ENCODE measurements at regions of chr4 and their contacts with region 1.

Region 1: GRCh38 chr4:152535903-152536544 is at the start of gene FBXW7:
- DNase-seq: peak; percentile 99
- H3K4me3 Mint-ChIP-seq: peak within 1 kb of the TSS; percentile 92
- H3K27ac Mint-ChIP-seq: peak within 1 kb of the TSS; percentile 95
- H3K4me1 Mint-ChIP-seq: peaks cover 49% of the 10 kb centered on the region
- H3K27me3 Mint-ChIP-seq: no peaks in the 10 kb centered on the region
- CTCF ChIP-seq: no peak
- total RNA-seq, gene FBXW7: 35.8 and 40.2 TPM in 2 replicates

Region 2: DNA sequence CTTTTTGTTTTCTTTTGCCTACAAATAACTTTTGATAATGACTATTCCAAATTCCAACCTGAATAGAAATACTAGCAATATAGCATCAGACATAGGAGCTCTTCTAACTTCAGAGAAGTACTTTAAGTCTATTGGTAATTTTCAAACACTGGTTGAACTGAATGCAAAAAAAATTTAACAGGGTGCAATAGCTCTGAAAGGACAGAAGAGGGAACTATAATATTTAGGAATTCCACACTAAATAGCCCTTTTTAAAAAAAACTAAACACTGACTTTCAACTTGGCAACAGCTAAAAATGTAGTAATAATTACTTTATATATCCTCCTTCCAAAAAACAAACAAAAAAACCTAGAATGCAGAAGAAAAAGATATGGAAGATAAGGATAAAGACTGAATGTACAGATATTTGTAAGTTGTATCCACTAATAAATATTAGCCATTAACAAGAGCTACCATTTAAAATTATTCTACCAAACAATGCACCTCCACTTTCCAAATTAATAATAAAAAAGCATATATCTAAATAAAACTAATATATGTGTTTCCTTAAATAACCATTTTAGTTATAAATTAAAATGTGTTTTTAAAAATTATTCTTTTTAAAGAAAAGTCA is 81.5 kb before region 1 on chr4:
- CTCF ChIA-PET with region 1: interaction called, 4 read pairs
- POLR2A ChIA-PET with region 1: interaction called, 10 read pairs
- intact Hi-C with region 1: no loop called
- DNase-seq: peak; percentile 24
- H3K4me3 Mint-ChIP-seq: no peak overlapping the region
- H3K27ac Mint-ChIP-seq: no peak overlapping the region
- H3K4me1 Mint-ChIP-seq: peaks cover 35% of the 10 kb centered on the region
- H3K27me3 Mint-ChIP-seq: no peaks in the 10 kb centered on the region
- CTCF ChIP-seq: peak; percentile 60

Region 3: GRCh38 chr4:152460488-152460887 is 75.5 kb before region 1 on chr4:
- CTCF ChIA-PET with region 1: interaction called, 4 read pairs
- POLR2A ChIA-PET with region 1: interaction called, 10 read pairs
- intact Hi-C with region 1: loop called (anchors 5 kb)
- DNase-seq: peak; percentile 80
- H3K4me3 Mint-ChIP-seq: no peak overlapping the region
- H3K27ac Mint-ChIP-seq: peak overlapping the region; percentile 54
- H3K4me1 Mint-ChIP-seq: peaks cover 39% of the 10 kb centered on the region
- H3K27me3 Mint-ChIP-seq: no peaks in the 10 kb centered on the region
- CTCF ChIP-seq: peak; percentile 31

Region 4: DNA sequence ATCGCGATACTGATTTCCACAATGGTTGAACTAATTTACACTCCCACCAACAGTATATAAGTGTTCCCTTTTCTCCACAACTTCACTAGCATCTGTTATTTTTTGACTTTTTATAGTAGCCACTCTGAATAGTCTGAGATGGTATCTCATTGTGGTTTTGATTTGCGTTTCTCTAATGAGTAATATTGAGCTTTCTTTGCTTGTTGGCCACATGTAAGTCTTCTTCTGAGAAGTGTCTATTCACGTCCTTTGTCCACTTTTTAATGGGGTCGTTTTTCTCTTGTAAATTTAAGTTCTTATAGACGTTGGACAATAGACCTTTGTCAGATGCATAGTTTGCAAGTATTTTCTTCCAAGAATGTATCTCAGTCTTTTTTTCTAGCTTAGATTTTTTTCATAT is 10.2 kb before region 1 on chr4:
- CTCF ChIA-PET with region 1: no interaction called
- POLR2A ChIA-PET with region 1: interaction called, 71 read pairs
- intact Hi-C with region 1: no loop called
- DNase-seq: no peak
- H3K4me3 Mint-ChIP-seq: no peak overlapping the region
- H3K27ac Mint-ChIP-seq: no peak overlapping the region
- H3K4me1 Mint-ChIP-seq: peaks cover 26% of the 10 kb centered on the region
- H3K27me3 Mint-ChIP-seq: no peaks in the 10 kb centered on the region
- CTCF ChIP-seq: no peak

Region 5: DNA sequence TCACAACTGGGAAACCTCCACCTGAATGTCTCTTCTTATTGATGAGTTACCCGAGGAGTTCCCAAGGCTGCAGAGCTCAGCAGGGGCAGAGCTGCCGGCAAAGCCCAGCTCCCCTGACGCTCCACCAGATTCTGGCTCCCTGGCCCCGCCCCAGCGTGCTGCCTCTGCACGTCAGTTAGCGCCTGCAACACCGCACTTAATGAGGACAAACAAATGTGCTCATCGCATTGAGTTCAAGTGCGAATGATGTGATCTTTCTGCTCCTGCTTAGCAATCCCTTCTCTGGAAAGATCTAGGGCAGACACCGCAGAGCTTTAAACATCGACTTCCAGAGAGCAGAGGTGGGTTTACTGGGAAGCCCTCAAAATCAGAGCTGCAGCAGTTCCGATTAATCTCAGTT is 55.4 kb after region 1 on chr4:
- CTCF ChIA-PET with region 1: interaction called, 4 read pairs
- POLR2A ChIA-PET with region 1: interaction called, 35 read pairs
- intact Hi-C with region 1: loop called (anchors 2 kb)
- DNase-seq: peak; percentile 8
- H3K4me3 Mint-ChIP-seq: peak overlapping the region; percentile 23
- H3K27ac Mint-ChIP-seq: no peak overlapping the region
- H3K4me1 Mint-ChIP-seq: peaks cover 21% of the 10 kb centered on the region
- H3K27me3 Mint-ChIP-seq: no peaks in the 10 kb centered on the region
- CTCF ChIP-seq: no peak

Region 6: GRCh38 chr4:152634110-152634760 is 98.2 kb after region 1 on chr4:
- CTCF ChIA-PET with region 1: interaction called, 6 read pairs
- POLR2A ChIA-PET with region 1: interaction called, 15 read pairs
- intact Hi-C with region 1: no loop called
- DNase-seq: peak; percentile 51
- H3K4me3 Mint-ChIP-seq: no peak overlapping the region
- H3K27ac Mint-ChIP-seq: peak overlapping the region; percentile 74
- H3K4me1 Mint-ChIP-seq: no peaks in the 10 kb centered on the region
- H3K27me3 Mint-ChIP-seq: no peaks in the 10 kb centered on the region
- CTCF ChIP-seq: no peak

Region 7: DNA sequence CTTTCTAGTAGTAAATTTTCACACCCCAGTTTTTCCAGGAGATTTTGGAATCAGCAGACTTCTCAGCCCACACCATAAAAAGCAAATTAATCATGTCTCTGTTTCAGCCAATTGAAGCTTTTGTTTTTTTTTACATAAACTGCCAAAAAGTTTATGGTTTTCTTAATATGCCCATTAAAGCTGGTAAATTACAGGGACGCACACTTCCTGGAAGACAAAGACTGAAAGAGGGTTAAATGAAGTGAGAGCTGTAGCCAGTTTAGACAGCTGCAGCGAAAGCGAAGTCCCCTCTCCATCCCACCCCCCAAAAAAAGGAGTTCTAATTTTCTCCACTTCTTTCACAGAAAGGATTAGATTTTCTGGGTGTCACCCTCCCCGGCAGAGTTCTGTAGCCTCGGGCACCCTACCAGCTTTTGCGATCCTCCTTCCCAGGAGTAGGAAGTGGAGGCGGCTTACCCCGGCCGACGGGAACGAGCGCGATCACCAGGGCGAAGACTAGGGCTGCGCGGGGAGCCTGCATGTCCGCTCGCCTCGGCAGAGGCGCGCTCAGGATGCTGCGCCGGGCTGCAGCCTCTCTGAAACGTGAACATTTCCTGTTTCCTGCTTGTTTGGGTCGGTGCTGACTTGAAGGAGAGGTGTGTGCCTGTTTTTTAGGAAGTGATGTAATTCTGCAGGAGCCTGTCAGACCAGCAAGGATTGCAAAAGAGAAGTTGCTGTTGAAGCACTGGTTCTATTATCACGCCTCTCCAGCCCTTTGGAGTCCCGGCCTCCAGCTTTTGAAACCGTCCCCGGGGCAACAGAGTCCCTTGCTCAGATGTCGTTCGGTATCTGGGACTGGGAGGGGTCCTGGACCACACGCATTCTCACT is 143.6 kb after region 1 on chr4 and contains the start of gene TMEM154:
- CTCF ChIA-PET with region 1: no interaction called
- POLR2A ChIA-PET with region 1: interaction called, 19 read pairs
- intact Hi-C with region 1: no loop called
- DNase-seq: peak; percentile 93
- H3K4me3 Mint-ChIP-seq: peak within 1 kb of the TSS; percentile 94
- H3K27ac Mint-ChIP-seq: peak within 1 kb of the TSS; percentile 91
- H3K4me1 Mint-ChIP-seq: peaks cover 22% of the 10 kb centered on the region
- H3K27me3 Mint-ChIP-seq: no peaks in the 10 kb centered on the region
- CTCF ChIP-seq: no peak
- total RNA-seq, gene TMEM154: 37.9 and 41.5 TPM in 2 replicates

Measured in MCF 10A (cell line).